ENCODE measurements at regions of chr15 and their contacts with region 1.

Region 1: GRCh38 chr15:71761649-71762369 is 48.5 kb upstream of the NR2E3 start:
- DNase-seq: peak in 2 of 5 donors; percentile 18 to 79
- ATAC-seq: peak in 3 of 4 donors; percentile 84 to 93 (median 86)
- H3K4me3 ChIP-seq: no peak overlapping the region
- H3K27ac ChIP-seq: peak overlapping the region in 3 of 12 donors; percentile 32 to 68 (median 52)
- H3K4me1 ChIP-seq: peaks cover 0 to 24% (median 5%) of the 10 kb centered on the region in 12 donors
- H3K27me3 ChIP-seq: no peaks in the 10 kb centered on the region
- CTCF ChIP-seq: no peak
- POLR2A ChIP-seq: no peak

Region 2: GRCh38 chr15:71707230-71708050 is 54.4 kb before region 1 on chr15:
- intact Hi-C with region 1: loop called in 1 of 10 experiments (anchors 10 kb)
- DNase-seq: no peak
- ATAC-seq: peak; percentile 29 to 56 (median 46)
- H3K4me3 ChIP-seq: no peak overlapping the region
- H3K27ac ChIP-seq: peak overlapping the region; percentile 19 to 78 (median 60)
- H3K4me1 ChIP-seq: peaks cover 6 to 67% (median 40%) of the 10 kb centered on the region in 12 donors
- H3K27me3 ChIP-seq: no peaks in the 10 kb centered on the region
- CTCF ChIP-seq: no peak
- POLR2A ChIP-seq: no peak

Measured in heart left ventricle (tissue), 16 donors.